Mammary epithelial cell (primary cell): ENCODE measurements at regions of chr11 and their contacts with region 1.

Region 1: GRCh38 chr11:46554205-46555055 is 39.4 kb downstream of the AMBRA1 start:
- DNase-seq: peak; percentile 84
- H3K4me3 ChIP-seq: peak overlapping the region in 1 of 3 experiments; percentile 3
- H3K27ac ChIP-seq: peak overlapping the region; percentile 57
- H3K4me1 ChIP-seq: peaks cover 31% of the 10 kb centered on the region
- H3K27me3 ChIP-seq: no peaks in the 10 kb centered on the region
- CTCF ChIP-seq: no peak

Region 2: DNA sequence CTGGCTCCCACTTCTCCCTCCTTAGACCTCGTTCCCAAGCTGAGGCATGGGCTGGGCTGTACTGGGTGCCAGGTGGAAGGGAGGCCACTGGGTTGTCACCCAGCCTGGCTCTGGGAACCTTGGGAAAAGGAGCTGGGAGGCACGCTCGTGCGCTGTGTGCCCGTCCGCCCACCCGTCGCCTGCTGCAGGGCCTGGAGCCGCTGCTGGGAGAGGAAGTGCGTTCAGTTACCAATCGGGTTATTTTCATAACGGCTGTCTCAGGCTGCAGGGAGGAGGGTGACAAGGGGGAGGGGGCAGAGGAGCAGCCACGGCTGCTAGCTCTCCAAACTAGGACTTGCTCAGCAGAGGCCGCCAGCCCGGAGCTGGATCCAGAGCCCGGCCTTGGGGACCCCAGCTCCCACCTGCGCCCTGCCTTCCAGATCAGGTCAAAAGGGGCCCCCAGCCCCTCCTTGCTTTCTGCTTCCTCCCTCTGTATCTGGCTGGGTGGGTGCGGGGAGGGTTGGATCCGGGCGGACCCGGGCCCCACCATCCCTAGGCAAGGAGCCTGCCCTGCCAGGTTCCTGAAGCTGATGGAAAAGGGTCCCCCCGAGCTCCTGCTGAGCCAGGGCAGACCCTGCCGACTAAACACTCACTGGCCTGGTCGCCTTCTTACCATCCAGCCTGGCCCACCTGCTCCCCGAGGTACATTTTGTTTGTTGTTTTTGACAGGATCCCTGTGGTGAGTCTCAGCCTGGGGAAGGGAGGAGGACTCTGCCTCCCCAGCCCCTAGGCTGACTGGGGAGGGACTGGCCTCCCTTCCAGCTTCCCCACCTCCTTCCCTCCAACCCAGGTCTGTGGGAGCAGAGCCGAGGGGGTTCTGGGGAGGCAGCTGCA is 192.9 kb before region 1 on chr11:
- CTCF ChIA-PET with region 1: interaction called, 15 read pairs
- dilution Hi-C with region 1: no loop called
- in situ Hi-C with region 1: no loop called
- intact Hi-C with region 1: no loop called
- DNase-seq: no peak
- H3K4me3 ChIP-seq: no peak overlapping the region
- H3K27ac ChIP-seq: no peak overlapping the region
- H3K4me1 ChIP-seq: peaks cover 53% of the 10 kb centered on the region
- H3K27me3 ChIP-seq: no peaks in the 10 kb centered on the region
- CTCF ChIP-seq: no peak

Region 3: GRCh38 chr11:46593550-46594373 is 39.3 kb after region 1 on chr11 and contains the start of gene AMBRA1:
- CTCF ChIA-PET with region 1: no interaction called
- dilution Hi-C with region 1: no loop called
- in situ Hi-C with region 1: no loop called
- intact Hi-C with region 1: loop called (anchors 5 kb)
- DNase-seq: peak; percentile 91
- H3K4me3 ChIP-seq: peak within 1 kb of the TSS; percentile 65 to 85 (median 80)
- H3K27ac ChIP-seq: peak within 1 kb of the TSS; percentile 60
- H3K4me1 ChIP-seq: peaks cover 13% of the 10 kb centered on the region
- H3K27me3 ChIP-seq: no peaks in the 10 kb centered on the region
- CTCF ChIP-seq: no peak
- total RNA-seq, gene AMBRA1: 23.2 to 26.3 TPM

Region 4: GRCh38 chr11:46659908-46660307 is 105.5 kb after region 1 on chr11:
- CTCF ChIA-PET with region 1: no interaction called
- dilution Hi-C with region 1: no loop called
- in situ Hi-C with region 1: no loop called
- intact Hi-C with region 1: no loop called
- DNase-seq: no peak
- H3K4me3 ChIP-seq: no peak overlapping the region
- H3K27ac ChIP-seq: no peak overlapping the region
- H3K4me1 ChIP-seq: peaks cover 10% of the 10 kb centered on the region
- H3K27me3 ChIP-seq: no peaks in the 10 kb centered on the region
- CTCF ChIP-seq: no peak